ENCODE measurements at regions of chr1 and their contacts with region 1.

Region 1: DNA sequence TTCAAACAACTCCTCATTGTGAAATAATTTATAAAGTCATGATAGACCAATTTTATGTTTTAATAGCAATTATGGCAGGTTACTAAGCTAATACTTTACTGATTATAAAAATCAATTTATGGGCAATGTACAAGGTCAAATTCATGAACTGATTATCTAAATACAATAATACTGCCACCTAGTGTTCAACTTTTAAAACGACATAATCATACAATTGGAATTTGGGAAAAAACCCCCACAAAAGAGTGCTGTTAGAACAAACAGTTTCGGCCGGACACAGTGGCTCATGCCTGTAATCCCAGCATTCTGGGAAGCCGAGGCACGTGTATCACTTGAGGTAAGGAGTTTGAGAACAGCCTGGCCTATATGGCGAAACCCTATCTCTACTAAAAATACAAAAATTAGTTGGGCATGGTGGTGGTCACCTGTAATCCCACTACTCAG is 14.0 kb downstream of the GTF2B start:
- DNase-seq: peak; percentile 61
- ATAC-seq: peak; percentile 71
- H3K4me3 ChIP-seq: no peak overlapping the region
- H3K27ac ChIP-seq: peak overlapping the region; percentile 52; the same call in 1 of the 2 replicates
- H3K4me1 ChIP-seq: peaks cover 12% of the 10 kb centered on the region; the same call in 1 of the 2 replicates
- H3K27me3 ChIP-seq: no peaks in the 10 kb centered on the region
- CTCF ChIP-seq: peak; percentile 53
- POLR2A ChIP-seq: no peak
- RAD21 ChIP-seq: peak; percentile 49

Region 2: DNA sequence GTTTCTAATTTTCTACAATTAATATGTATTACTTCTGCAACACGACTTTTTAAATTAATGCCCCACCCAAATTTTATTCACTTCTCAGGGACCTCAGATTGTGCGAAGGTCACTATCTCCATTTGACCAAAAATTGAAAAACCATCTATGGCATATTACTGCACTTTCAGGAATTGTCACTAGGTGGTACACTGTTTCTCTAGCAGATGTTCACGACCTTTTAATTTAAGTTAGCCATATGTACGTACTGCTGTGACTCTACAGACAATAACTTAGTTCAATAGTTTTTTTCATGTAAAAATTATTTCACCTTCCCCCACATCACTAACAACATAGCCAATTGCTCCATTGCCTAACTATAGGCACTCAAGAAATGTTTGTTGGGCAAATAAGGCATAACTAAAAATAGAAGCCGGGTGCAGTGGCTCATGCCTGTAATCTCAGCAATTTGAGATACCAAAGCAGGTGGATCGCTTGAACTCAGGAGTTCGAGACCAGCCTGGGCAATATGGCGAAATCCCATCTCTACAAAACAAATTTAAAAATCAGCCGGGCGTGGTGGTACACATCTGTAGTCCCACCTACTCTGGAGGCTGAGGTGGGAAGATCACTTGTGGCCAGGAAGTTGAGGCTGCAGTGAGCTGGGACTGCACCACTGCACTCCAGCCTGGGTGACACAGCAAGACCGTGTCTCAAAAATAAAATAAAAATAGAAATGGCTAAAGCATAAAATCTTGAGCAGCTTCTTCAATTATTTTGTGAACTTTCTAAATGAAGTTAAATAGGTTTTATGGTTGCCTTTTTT is 269.1 kb before region 1 on chr1:
- CTCF ChIA-PET with region 1: no interaction called
- POLR2A ChIA-PET with region 1: no interaction called
- dilution Hi-C with region 1: no loop called
- in situ Hi-C with region 1: no loop called
- intact Hi-C with region 1: loop called (anchors 1 kb)
- DNase-seq: peak; percentile 37
- ATAC-seq: peak; percentile 84
- H3K4me3 ChIP-seq: no peak overlapping the region
- H3K27ac ChIP-seq: no peak overlapping the region
- H3K4me1 ChIP-seq: no peaks in the 10 kb centered on the region
- H3K27me3 ChIP-seq: no peaks in the 10 kb centered on the region; the same call in 1 of the 2 replicates
- CTCF ChIP-seq: peak; percentile 57
- POLR2A ChIP-seq: no peak
- RAD21 ChIP-seq: peak; percentile 43; the same call in 1 of the 2 replicates

Region 3: GRCh38 chr1:88655685-88656299 is 221.6 kb before region 1 on chr1:
- CTCF ChIA-PET with region 1: interaction called, 3 read pairs
- POLR2A ChIA-PET with region 1: no interaction called
- dilution Hi-C with region 1: no loop called
- in situ Hi-C with region 1: no loop called
- intact Hi-C with region 1: loop called (anchors 1 kb)
- DNase-seq: peak; percentile 37
- ATAC-seq: no peak; the same call in 1 of the 2 replicates
- H3K4me3 ChIP-seq: no peak overlapping the region
- H3K27ac ChIP-seq: no peak overlapping the region
- H3K4me1 ChIP-seq: no peaks in the 10 kb centered on the region
- H3K27me3 ChIP-seq: no peaks in the 10 kb centered on the region
- CTCF ChIP-seq: peak; percentile 62
- POLR2A ChIP-seq: no peak
- RAD21 ChIP-seq: peak; percentile 40

Region 4: DNA sequence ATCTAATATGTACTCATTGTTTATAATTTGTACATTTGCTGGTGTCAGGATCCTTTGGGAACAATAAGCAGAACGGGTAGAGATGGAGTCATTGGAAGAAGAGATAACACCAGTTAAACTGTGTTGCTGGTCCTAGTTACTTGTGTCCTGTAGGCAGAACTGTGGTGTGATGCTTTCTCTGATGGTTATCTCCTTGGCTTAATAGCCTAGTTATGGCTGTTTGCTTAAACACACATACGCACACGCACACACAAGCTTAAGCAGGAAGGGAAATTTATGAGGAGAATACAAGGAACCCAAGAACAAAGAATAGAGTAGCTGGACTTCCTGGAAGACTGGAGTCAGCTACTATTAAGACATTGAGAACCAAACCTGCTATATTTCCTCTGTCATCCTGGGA is 199.0 kb before region 1 on chr1:
- CTCF ChIA-PET with region 1: no interaction called
- POLR2A ChIA-PET with region 1: no interaction called
- dilution Hi-C with region 1: no loop called
- in situ Hi-C with region 1: loop called (anchors 10 kb)
- intact Hi-C with region 1: no loop called
- DNase-seq: no peak
- ATAC-seq: no peak
- H3K4me3 ChIP-seq: no peak overlapping the region
- H3K27ac ChIP-seq: no peak overlapping the region
- H3K4me1 ChIP-seq: 0 out of 2 replicates have a peak, but pooled peaks cover 1% of the 10 kb centered on the region
- H3K27me3 ChIP-seq: no peaks in the 10 kb centered on the region
- CTCF ChIP-seq: no peak
- POLR2A ChIP-seq: no peak
- RAD21 ChIP-seq: no peak

Region 5: GRCh38 chr1:88683541-88684481 is 193.6 kb before region 1 on chr1 and contains the start of gene PKN2:
- CTCF ChIA-PET with region 1: no interaction called
- POLR2A ChIA-PET with region 1: no interaction called
- dilution Hi-C with region 1: no loop called
- in situ Hi-C with region 1: loop called (anchors 10 kb)
- intact Hi-C with region 1: loop called (anchors 2 kb)
- DNase-seq: peak; percentile 98
- ATAC-seq: peak; percentile 97
- H3K4me3 ChIP-seq: peak within 1 kb of the TSS; percentile 75
- H3K27ac ChIP-seq: peak within 1 kb of the TSS; percentile 86
- H3K4me1 ChIP-seq: no peaks in the 10 kb centered on the region
- H3K27me3 ChIP-seq: no peaks in the 10 kb centered on the region
- CTCF ChIP-seq: peak; percentile 31
- POLR2A ChIP-seq: peak; percentile 81
- RAD21 ChIP-seq: 0 out of 2 replicates have a peak, but pooled peaks have one; percentile 6
- total RNA-seq, gene PKN2: 22.2 and 40.8 TPM in 2 replicates

Region 6: DNA sequence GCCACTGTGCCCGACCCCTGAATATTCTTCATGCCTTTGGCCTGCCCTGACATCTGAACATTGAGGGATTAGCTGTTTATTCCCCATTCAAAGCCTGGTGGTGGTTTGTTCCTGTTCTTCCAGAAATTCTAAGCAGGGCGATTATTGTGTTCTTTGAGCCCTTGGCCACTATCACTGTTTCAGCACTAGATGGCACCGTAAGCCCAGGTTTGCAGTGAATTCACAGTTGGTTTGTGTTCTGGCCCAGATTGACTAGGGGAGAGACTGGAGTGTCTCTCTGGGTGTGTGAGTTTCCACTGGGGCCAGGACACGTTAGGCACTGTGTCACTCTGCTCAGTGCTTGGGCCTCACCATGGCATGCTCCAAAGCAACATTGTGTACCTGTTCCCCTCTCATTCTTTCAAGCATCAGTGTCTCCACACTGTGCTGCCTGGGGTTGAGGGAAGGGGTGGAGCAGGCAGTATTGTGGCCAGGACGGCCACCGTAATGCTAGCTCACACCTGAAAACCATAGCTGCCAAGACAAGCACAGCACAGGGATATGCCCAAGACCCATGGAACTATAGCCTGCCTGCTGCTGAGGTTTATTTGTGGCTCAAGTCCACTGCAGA is 140.7 kb before region 1 on chr1:
- CTCF ChIA-PET with region 1: interaction called, 3 read pairs
- POLR2A ChIA-PET with region 1: no interaction called
- dilution Hi-C with region 1: no loop called
- in situ Hi-C with region 1: loop called (anchors 10 kb)
- intact Hi-C with region 1: loop called (anchors 1 kb)
- DNase-seq: peak; percentile 55
- ATAC-seq: peak; percentile 65
- H3K4me3 ChIP-seq: no peak overlapping the region
- H3K27ac ChIP-seq: no peak overlapping the region
- H3K4me1 ChIP-seq: peaks cover 3% of the 10 kb centered on the region; the same call in 1 of the 2 replicates
- H3K27me3 ChIP-seq: no peaks in the 10 kb centered on the region
- CTCF ChIP-seq: peak; percentile 74
- POLR2A ChIP-seq: no peak
- RAD21 ChIP-seq: peak; percentile 88

Region 7: DNA sequence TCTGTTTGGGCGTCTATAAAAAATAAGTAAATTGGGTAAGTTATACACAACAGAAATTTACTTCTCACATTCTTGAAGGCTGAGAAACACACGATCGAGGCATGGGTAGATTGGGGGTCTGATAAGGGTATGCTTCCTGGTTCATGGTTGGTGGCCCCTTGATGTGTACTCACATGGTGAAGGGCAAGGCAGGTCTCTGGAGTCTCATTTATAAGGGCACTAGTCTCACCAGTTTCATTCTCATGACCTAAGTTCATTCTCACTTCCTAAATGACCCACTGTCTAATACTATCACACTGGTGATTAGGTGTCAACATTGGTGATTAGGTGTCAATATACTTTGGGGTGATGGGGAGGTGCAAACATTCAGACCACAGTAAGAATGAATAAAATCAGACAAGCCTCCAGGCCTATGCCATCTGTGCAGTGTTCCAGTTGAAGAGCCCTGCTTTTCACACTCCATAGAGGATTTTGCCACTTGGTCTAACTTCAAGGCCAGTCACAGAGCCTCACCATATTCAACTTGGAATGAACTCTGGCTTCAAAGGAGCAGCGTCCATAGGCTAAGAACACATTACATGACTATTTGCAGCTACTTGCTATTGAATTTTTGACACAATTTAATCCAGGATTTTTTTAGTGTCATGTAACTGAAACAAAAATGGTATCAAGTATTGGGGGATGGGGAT is 323.8 kb after region 1 on chr1:
- CTCF ChIA-PET with region 1: no interaction called
- POLR2A ChIA-PET with region 1: no interaction called
- dilution Hi-C with region 1: no loop called
- in situ Hi-C with region 1: no loop called
- intact Hi-C with region 1: no loop called
- DNase-seq: no peak
- ATAC-seq: no peak
- H3K4me3 ChIP-seq: no peak overlapping the region
- H3K27ac ChIP-seq: no peak overlapping the region
- H3K4me1 ChIP-seq: no peaks in the 10 kb centered on the region
- H3K27me3 ChIP-seq: peaks cover 3% of the 10 kb centered on the region; the same call in 1 of the 2 replicates
- CTCF ChIP-seq: no peak
- POLR2A ChIP-seq: no peak
- RAD21 ChIP-seq: no peak

Measured in IMR-90 (cell line).